Right ventricle myocardium inferior (tissue), 1 donor: ENCODE measurements at regions of chr11 and their contacts with region 1.

Region 1: GRCh38 chr11:69642913-69643632 is 2.1 kb downstream of the CCND1 start:
- DNase-seq: peak; percentile 92
- ATAC-seq: peak; percentile 74

Region 2: GRCh38 chr11:69101115-69101791 is 541.8 kb before region 1 on chr11:
- intact Hi-C with region 1: loop called (anchors 1 kb)
- DNase-seq: peak; percentile 83
- ATAC-seq: peak; percentile 87

Region 3: GRCh38 chr11:69122642-69123431 is 520.2 kb before region 1 on chr11:
- intact Hi-C with region 1: loop called (anchors 5 kb)
- DNase-seq: no peak
- ATAC-seq: peak; percentile 87

Region 4: GRCh38 chr11:69296890-69297786 is 345.9 kb before region 1 on chr11:
- intact Hi-C with region 1: loop called (anchors 2 kb)
- DNase-seq: peak; percentile 97
- ATAC-seq: peak; percentile 76

Region 5: DNA sequence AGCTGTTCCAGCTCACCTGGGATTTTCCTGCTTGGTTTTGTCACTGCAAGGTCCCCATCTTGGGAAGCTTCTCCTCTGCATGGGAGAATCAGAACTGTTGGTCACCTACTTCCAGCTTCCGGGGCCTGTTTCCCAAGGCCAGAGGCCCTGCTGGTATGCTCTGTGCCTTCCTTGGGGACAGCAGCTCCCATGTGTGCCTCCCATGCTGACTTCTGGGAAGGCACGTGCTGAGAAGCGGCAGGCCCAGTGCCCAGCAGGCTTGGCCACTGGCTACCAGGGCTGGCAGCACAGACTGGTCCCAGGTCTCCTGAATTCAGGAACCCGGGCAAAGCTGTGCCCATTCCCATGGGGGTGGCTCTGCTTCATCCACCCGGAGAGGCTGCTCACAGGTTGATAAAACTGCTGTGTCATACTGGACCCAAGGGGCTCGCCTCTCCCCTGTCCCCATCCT is 315.3 kb before region 1 on chr11:
- intact Hi-C with region 1: no loop called
- DNase-seq: no peak
- ATAC-seq: no peak

Region 6: GRCh38 chr11:69443138-69443967 is 199.7 kb before region 1 on chr11:
- intact Hi-C with region 1: loop called (anchors 2 kb)
- DNase-seq: peak; percentile 95
- ATAC-seq: peak; percentile 94

Region 7: GRCh38 chr11:69497221-69497787 is 145.8 kb before region 1 on chr11:
- intact Hi-C with region 1: loop called (anchors 2 kb)
- DNase-seq: peak; percentile 90
- ATAC-seq: peak; percentile 96